AG04450 (cell line): ENCODE measurements at regions of chr22 and their contacts with region 1.

Region 1: GRCh38 chr22:49960159-49961004 is at the start of gene PIM3:
- DNase-seq: peak; percentile 85
- H3K4me3 ChIP-seq: peak within 1 kb of the TSS; percentile 82
- H3K27ac ChIP-seq: peak within 1 kb of the TSS; percentile 52
- H3K27me3 ChIP-seq: no peaks in the 10 kb centered on the region
- CTCF ChIP-seq: no peak
- polyA plus RNA-seq, gene PIM3: 6.1 and 8.2 TPM in 2 replicates

Region 2: GRCh38 chr22:49970528-49971231 is 10.3 kb after region 1 on chr22:
- CTCF ChIA-PET with region 1: no interaction called
- POLR2A ChIA-PET with region 1: interaction called, 12 read pairs
- DNase-seq: peak; percentile 80
- H3K4me3 ChIP-seq: peak overlapping the region; percentile 55
- H3K27ac ChIP-seq: peak overlapping the region; percentile 92
- H3K27me3 ChIP-seq: no peaks in the 10 kb centered on the region
- CTCF ChIP-seq: no peak

Region 3: GRCh38 chr22:49983148-49984042 is 23.0 kb after region 1 on chr22:
- CTCF ChIA-PET with region 1: no interaction called
- POLR2A ChIA-PET with region 1: no interaction called
- DNase-seq: no peak
- H3K4me3 ChIP-seq: 0 out of 2 replicates have a peak overlapping the region, but pooled peaks have one; percentile 4
- H3K27ac ChIP-seq: no peak overlapping the region
- H3K27me3 ChIP-seq: peaks cover 27% of the 10 kb centered on the region
- CTCF ChIP-seq: peak; percentile 42